Cardiac septum (tissue), 1 donor: ENCODE measurements at regions of chr6 and their contacts with region 1.

Region 1: DNA sequence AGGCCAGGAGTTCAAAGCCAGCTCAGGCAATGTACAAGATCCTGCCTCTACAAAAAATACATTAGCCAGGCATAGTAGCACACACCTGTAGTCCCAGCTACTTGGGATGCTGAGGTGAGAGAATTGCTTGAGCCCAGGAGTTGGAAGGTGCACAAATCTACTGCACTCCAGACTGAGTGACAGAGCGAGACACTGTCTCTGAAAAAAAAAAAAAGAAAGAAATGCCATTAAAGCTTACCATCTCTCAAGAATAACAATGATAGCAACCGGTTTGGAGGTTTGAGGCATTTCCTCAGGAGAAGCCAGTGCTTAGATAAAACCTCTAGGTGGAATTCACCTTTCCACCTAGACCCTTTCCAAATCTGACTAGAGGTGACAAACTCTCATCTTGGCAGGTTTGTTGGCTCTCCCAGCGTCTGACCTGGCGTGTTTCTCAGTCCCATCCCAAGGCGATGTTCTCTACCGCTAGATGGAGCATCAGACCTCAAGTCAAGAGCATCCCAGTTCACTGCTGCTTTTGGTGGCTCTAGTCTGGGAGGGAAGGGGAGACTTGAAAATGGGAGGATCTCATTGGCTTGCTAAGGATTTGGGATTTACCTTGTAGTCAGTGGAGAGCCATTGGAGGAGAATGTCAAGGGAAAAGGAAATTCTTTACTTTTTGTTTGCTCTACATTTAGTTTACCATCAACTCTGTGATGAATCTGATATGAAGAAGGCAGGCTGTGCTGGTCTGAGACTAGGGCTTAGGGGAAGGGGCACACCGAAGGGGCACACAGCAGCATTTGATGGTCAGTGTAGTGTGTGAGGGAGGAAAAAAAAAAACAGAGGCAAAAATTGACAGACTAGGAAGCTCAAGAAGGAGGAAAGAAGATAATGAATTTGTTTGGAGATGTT is 67.9 kb downstream of the NCOA7 start:
- DNase-seq: no peak

Region 2: DNA sequence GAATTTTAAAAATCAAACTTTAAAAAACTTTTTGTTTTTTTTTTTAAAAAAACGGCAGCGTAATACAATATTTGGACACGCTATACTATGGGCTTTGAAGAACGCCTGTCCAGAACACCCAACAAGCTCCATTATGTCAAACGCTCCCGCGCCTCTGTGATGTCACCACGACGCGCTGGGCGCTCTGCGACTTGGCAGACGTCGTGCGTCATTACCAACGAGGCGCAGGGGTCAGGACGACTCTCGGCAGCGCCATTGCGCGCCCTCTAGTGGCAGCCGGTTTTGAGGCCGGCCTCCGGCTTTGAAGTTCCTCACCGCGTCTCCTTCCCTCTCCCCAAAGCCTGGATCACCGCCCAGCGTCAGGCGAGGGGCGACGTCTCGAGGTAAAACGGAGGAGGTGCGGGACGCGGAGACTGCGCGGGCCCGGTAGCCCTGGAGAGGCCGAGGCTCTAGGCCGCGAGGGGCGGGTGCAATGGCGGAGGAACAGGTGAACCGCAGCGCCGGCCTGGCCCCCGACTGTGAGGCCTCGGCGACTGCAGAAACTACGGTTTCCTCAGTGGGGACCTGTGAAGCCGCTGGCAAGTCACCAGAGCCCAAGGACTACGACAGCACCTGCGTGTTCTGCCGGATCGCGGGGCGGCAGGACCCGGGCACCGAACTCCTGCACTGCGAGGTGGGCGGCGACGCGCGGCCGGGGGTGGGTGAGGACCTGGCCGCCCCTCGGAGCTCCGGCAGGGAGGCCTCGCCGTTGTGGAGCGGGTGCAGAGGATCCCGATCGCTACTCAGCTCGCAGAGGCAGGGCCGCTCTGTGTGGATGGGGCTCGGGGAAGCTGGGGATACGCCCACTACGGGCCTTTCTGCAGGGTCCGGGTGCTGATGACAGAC is 98.1 kb after region 1 on chr6 and contains the start of gene HINT3:
- intact Hi-C with region 1: loop called (anchors 5 kb)
- DNase-seq: peak; percentile 99
- total RNA-seq, gene HINT3: 35.0 TPM